Transverse colon (tissue), 4 donors: ENCODE measurements at regions of chr20 and their contacts with region 1.

Region 1: DNA sequence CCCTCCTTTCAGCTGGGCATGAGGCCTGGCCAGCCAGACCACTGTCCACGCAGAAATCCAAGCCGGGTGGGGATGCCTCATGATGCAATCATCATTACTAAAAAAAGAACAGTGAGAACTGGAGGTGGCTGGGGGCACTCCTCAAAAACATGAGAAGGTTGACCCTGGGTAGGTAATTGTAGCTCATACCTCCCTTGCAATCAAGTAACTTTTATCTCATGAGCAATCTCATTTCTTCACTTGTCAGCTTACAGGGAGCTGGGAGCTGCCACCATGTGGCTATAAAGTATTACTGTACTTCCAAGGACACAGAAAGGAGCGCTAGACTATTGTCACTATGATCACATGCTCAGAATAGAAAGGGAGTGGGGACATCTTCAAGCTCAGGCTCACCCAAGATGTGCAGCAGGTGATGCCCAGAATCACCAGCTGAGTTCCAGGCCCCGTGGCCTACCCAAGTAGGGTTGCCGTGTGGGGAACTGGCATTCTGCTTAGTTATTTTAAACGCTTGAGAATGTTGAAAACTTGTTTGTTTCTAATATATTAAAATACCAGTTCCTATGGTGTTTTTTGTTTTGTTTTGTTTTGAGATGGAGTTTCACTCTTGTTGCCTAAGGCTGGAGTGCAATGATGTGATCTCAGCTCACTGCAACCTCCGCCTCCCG is 3.0 kb upstream of the CDH26 start:
- DNase-seq: no peak
- H3K4me3 ChIP-seq: no peak overlapping the region
- H3K27ac ChIP-seq: no peak overlapping the region
- H3K4me1 ChIP-seq: peaks cover 0 to 4% (median 0%) of the 10 kb centered on the region in 4 donors
- H3K27me3 ChIP-seq: peaks cover 4% of the 10 kb centered on the region
- CTCF ChIP-seq: peak in 4 of 5 experiments; percentile 14 to 34 (median 30)
- EP300 ChIP-seq: no peak
- POLR2A ChIP-seq: no peak

Region 2: GRCh38 chr20:59925939-59926338 is 29.3 kb before region 1 on chr20:
- in situ Hi-C with region 1: no loop called
- intact Hi-C with region 1: no loop called
- DNase-seq: no peak
- H3K4me3 ChIP-seq: no peak overlapping the region
- H3K27ac ChIP-seq: no peak overlapping the region
- H3K4me1 ChIP-seq: peaks cover 0 to 27% (median 11%) of the 10 kb centered on the region in 4 donors
- H3K27me3 ChIP-seq: no peaks in the 10 kb centered on the region
- CTCF ChIP-seq: no peak
- EP300 ChIP-seq: no peak
- POLR2A ChIP-seq: no peak

Region 3: DNA sequence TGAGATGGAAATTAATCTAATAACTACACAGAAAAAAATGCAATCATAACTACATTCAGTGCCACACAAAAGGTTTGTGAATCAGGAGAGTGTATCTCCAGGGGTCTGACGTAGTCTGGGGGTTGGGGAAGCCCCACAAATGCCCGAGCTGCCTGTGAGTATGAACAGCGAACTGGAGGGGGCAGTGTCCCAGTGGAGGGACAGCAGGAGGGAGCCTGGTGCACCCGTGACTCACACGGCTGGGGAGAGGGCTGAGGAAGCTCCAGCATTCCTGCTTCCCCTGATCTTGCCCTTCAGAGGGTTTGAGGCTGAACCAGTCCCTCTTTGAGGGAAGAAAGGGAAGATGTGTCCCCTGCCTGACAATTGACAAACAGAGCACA is 81.8 kb after region 1 on chr20:
- in situ Hi-C with region 1: loop called in 1 of 4 experiments (anchors 10 kb)
- intact Hi-C with region 1: no loop called
- DNase-seq: no peak
- H3K4me3 ChIP-seq: no peak overlapping the region
- H3K27ac ChIP-seq: no peak overlapping the region
- H3K4me1 ChIP-seq: no peaks in the 10 kb centered on the region
- H3K27me3 ChIP-seq: peaks cover 3% of the 10 kb centered on the region
- CTCF ChIP-seq: no peak
- EP300 ChIP-seq: no peak
- POLR2A ChIP-seq: no peak

Region 4: GRCh38 chr20:60095456-60095855 is 140.2 kb after region 1 on chr20:
- in situ Hi-C with region 1: no loop called
- intact Hi-C with region 1: no loop called
- DNase-seq: no peak
- H3K4me3 ChIP-seq: no peak overlapping the region
- H3K27ac ChIP-seq: no peak overlapping the region
- H3K4me1 ChIP-seq: no peaks in the 10 kb centered on the region
- H3K27me3 ChIP-seq: peaks cover 5% of the 10 kb centered on the region
- CTCF ChIP-seq: no peak
- EP300 ChIP-seq: no peak
- POLR2A ChIP-seq: no peak